CD4-positive, alpha-beta memory T cell (primary cell): ENCODE measurements at regions of chr6 and their contacts with region 1.

Region 1: GRCh38 chr6:30742316-30743098 is at the start of gene FLOT1:
- DNase-seq: peak; percentile 67 to 88 (median 68)
- H3K4me3 ChIP-seq: peak within 1 kb of the TSS; percentile 50 to 64
- H3K4me3 Mint-ChIP-seq: peak within 1 kb of the TSS; percentile 87 to 97 (median 91)
- H3K27ac ChIP-seq: peak within 1 kb of the TSS; percentile 63
- H3K27ac Mint-ChIP-seq: peak within 1 kb of the TSS; percentile 84 to 98 (median 93)
- H3K4me1 ChIP-seq: peaks cover 54% of the 10 kb centered on the region
- H3K4me1 Mint-ChIP-seq: peaks cover 44 to 75% (median 59%) of the 10 kb centered on the region in 4 donors
- H3K27me3 ChIP-seq: no peaks in the 10 kb centered on the region
- H3K27me3 Mint-ChIP-seq: no peaks in the 10 kb centered on the region
- total RNA-seq, gene FLOT1: 75.3 to 78.5 TPM

Region 2: GRCh38 chr6:30295837-30296236 is 446.7 kb before region 1 on chr6:
- CTCF ChIA-PET with region 1: no interaction called
- POLR2A ChIA-PET with region 1: no interaction called
- intact Hi-C with region 1: no loop called
- DNase-seq: no peak
- H3K4me3 ChIP-seq: no peak overlapping the region
- H3K4me3 Mint-ChIP-seq: no peak overlapping the region
- H3K27ac ChIP-seq: no peak overlapping the region
- H3K27ac Mint-ChIP-seq: no peak overlapping the region
- H3K4me1 ChIP-seq: no peaks in the 10 kb centered on the region
- H3K4me1 Mint-ChIP-seq: peaks cover 2 to 5% (median 3%) of the 10 kb centered on the region in 4 donors
- H3K27me3 ChIP-seq: no peaks in the 10 kb centered on the region
- H3K27me3 Mint-ChIP-seq: no peaks in the 10 kb centered on the region

Region 3: GRCh38 chr6:30500421-30501355 is 241.8 kb before region 1 on chr6:
- CTCF ChIA-PET with region 1: no interaction called
- POLR2A ChIA-PET with region 1: no interaction called
- intact Hi-C with region 1: no loop called
- DNase-seq: no peak
- H3K4me3 ChIP-seq: peak overlapping the region in 1 of 2 donors; percentile 6
- H3K4me3 Mint-ChIP-seq: peak overlapping the region; percentile 70 to 85 (median 80)
- H3K27ac ChIP-seq: no peak overlapping the region
- H3K27ac Mint-ChIP-seq: peak overlapping the region; percentile 25 to 89 (median 73)
- H3K4me1 ChIP-seq: peaks cover 34% of the 10 kb centered on the region
- H3K4me1 Mint-ChIP-seq: peaks cover 24 to 42% (median 32%) of the 10 kb centered on the region in 4 donors
- H3K27me3 ChIP-seq: no peaks in the 10 kb centered on the region
- H3K27me3 Mint-ChIP-seq: no peaks in the 10 kb centered on the region

Region 4: DNA sequence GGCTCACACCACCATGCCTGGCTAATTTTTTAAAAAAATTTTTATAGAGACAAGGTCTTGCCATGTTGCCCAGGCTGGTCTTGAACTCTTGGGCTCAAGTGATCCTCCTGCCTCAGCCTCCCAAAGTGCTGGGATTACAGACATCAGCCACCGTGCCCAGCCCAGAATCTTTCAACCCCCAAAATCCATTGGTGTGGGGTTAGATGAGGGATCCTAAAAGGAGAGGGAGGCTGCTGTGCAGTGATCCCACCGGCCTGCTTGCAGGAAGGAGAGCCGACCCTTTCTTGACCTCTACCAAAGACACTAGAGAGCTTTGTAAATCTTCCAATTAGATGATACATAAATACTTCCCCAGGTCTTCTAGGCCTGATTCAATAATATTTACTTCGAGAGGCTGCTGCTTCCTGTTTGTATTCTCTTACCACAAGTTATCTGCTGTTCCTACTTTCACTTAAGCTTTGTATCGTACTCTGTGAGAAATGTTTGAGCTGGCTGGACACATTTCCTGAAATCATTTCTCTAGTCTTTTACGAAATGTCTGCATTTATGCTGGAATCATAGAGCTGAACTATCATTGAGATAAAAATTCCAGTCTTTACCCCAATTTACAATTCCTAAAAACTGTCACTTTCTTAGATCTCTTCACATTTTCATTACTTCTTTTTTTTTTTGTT is 51.2 kb after region 1 on chr6:
- CTCF ChIA-PET with region 1: interaction called, 4 read pairs
- POLR2A ChIA-PET with region 1: interaction called, 16 read pairs
- intact Hi-C with region 1: loop called (anchors 2 kb)
- DNase-seq: peak in 4 of 5 donors; percentile 51 to 62 (median 55)
- H3K4me3 ChIP-seq: peak overlapping the region in 1 of 2 donors; percentile 11
- H3K4me3 Mint-ChIP-seq: peak overlapping the region; percentile 43 to 79 (median 74)
- H3K27ac ChIP-seq: peak overlapping the region; percentile 40
- H3K27ac Mint-ChIP-seq: peak overlapping the region; percentile 88 to 97 (median 95)
- H3K4me1 ChIP-seq: peaks cover 41% of the 10 kb centered on the region
- H3K4me1 Mint-ChIP-seq: peaks cover 37 to 70% (median 49%) of the 10 kb centered on the region in 4 donors
- H3K27me3 ChIP-seq: no peaks in the 10 kb centered on the region
- H3K27me3 Mint-ChIP-seq: peaks cover 0 to 2% of the 10 kb centered on the region in 2 donors

Region 5: DNA sequence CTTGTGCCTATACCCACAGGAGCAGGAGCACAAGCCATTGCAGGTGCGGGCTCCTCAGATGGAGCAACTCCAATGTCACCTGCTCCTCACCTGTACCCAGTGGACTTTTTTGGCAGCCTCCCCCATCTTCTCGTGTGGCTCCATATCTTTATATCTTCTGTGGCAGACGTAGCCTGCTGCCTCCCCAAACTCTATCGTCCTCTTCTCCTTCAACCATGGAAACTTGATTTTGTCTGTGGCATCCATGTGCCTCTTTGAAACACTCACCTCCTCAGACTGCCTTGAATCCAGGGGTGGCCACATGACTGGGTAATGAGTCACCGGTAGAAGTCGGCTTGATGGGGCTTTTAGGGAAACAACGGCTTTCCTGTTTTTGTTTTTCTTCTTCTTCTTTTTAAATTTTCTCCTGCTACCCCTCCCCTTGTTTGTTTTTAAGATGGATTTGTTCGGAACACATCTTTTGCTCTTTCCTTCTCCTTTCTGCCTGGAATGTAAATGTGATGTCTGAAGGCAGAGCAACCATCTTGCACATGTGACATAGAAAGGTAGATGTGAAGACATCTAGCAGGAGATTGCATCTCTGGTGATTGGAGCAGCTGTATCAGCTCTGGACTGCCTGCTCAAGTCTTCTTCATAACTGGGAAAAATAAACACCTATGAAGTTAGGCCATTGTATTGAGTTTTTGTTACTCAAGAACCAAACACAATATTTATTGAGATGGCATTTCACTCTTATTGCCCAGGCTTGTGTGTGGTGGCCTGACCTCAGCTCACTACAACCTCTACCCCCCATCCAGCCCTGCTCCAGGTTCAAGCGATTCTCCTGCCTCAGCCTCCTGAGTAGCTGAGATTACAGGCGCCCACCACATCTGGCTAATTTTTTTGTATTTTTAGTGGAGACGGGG is 71.9 kb after region 1 on chr6:
- CTCF ChIA-PET with region 1: no interaction called
- POLR2A ChIA-PET with region 1: interaction called, 3 read pairs
- intact Hi-C with region 1: loop called (anchors 5 kb)
- DNase-seq: peak in 1 of 5 donors; percentile 70
- H3K4me3 ChIP-seq: no peak overlapping the region
- H3K4me3 Mint-ChIP-seq: peak overlapping the region in 7 of 8 donors; percentile 29 to 69 (median 56)
- H3K27ac ChIP-seq: no peak overlapping the region
- H3K27ac Mint-ChIP-seq: peak overlapping the region; percentile 7 to 92 (median 75)
- H3K4me1 ChIP-seq: peaks cover 58% of the 10 kb centered on the region
- H3K4me1 Mint-ChIP-seq: peaks cover 50 to 80% (median 65%) of the 10 kb centered on the region in 4 donors
- H3K27me3 ChIP-seq: no peaks in the 10 kb centered on the region
- H3K27me3 Mint-ChIP-seq: no peaks in the 10 kb centered on the region

Region 6: DNA sequence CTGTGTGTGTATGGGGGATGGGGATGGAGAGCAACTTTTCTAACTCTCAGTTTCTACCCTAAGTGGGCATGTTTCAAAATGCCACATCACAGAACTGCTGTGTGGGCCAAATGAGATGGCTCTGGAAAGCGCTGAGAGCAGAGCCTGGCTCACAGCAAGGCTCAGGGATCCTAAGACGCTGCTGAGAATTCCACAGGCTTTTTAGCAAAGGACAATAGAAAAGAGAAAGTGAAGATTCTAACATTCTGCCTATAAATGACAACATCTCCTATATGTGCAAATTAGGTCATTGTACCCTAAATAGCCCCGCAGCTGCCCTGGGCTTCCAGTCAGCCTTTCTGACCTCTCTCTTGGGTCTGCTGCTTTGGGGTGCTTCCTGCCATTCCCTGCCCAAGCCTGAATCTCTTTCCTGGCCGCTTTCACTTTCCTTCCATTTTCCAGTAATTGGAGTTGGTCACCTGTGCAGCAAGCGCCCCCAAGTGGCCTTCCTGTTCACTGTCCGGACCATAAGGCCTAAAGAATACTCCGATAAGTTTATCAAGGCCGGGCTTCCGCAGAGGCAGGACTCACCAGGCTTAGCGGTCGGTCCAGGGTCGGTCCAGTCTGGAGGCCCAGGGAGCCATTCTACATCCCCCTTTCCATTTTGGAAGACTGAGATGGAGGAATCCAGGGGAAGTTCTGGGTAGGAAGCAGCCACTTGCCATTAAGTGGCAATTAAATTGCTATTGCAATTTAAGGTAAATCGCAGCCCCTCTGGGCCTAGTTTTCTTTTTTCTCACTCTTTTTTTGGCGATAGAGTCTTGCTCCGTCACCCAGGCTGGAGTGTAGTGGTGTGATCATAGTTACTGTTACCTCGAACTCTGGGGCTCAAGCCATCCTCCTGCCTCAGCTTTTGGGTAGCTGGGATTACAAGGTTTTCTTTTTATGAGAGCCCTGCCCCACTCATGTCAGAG is 135.2 kb after region 1 on chr6:
- CTCF ChIA-PET with region 1: interaction called, 5 read pairs
- POLR2A ChIA-PET with region 1: interaction called, 5 read pairs
- intact Hi-C with region 1: loop called (anchors 1 kb)
- DNase-seq: peak; percentile 62 to 71 (median 68)
- H3K4me3 ChIP-seq: peak overlapping the region; percentile 40 to 43
- H3K4me3 Mint-ChIP-seq: peak overlapping the region; percentile 61 to 91 (median 82)
- H3K27ac ChIP-seq: no peak overlapping the region
- H3K27ac Mint-ChIP-seq: peak overlapping the region in 6 of 7 donors; percentile 21 to 91 (median 72)
- H3K4me1 ChIP-seq: peaks cover 10% of the 10 kb centered on the region
- H3K4me1 Mint-ChIP-seq: peaks cover 7 to 27% (median 11%) of the 10 kb centered on the region in 4 donors
- H3K27me3 ChIP-seq: no peaks in the 10 kb centered on the region
- H3K27me3 Mint-ChIP-seq: no peaks in the 10 kb centered on the region